Activated naive CD4-positive, alpha-beta T cell treated with anti-CD3 and anti-CD28 coated beads for 36 hours (primary cell): ENCODE measurements at regions of chr20 and their contacts with region 1.

Region 1: DNA sequence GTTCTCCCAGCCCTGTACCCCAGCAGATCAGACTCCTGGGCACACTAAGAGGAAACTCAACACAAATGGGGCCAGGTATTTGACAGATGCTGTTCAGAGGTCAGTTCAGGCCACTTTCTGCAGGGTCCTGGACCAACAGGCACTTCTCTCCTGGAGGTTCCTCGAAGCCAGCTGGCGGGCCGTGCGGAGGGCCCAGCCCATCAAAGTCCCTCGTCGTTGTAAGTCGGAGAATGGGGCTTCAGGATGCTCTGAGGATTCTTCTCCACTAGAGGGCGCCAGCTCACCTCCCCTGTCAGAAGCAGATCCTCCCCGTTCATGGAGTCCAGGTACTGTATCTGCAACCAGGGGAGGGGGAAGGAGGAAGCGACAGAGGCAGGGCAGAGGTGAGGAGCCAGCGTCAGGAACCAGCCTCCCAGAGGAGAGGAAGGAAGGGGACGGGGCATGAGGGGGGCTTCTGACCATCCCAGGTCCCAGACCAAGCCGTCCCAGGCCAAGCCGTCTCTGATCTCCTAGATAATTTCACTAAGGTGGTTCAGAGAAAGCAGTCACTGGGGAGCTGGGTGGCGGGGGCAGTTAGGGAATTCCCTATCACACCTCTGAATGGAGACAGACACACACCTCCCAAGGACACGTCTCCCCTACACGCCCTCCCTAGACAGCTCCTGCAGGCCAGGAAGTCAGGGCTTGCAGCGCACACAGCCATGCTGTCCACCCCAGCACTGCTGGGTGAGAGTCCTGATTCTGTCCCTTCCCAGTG is 11.7 kb upstream of the FAM83C start:
- DNase-seq: peak; percentile 95
- H3K4me3 Mint-ChIP-seq: no peak overlapping the region
- H3K27ac Mint-ChIP-seq: peak overlapping the region; percentile 10
- H3K4me1 Mint-ChIP-seq: peaks cover 54% of the 10 kb centered on the region
- H3K27me3 Mint-ChIP-seq: no peaks in the 10 kb centered on the region

Region 2: GRCh38 chr20:35039146-35039545 is 264.8 kb before region 1 on chr20:
- CTCF ChIA-PET with region 1: no interaction called
- intact Hi-C with region 1: no loop called
- DNase-seq: no peak
- H3K4me3 Mint-ChIP-seq: no peak overlapping the region
- H3K27ac Mint-ChIP-seq: peak overlapping the region; percentile 69
- H3K4me1 Mint-ChIP-seq: peaks cover 6% of the 10 kb centered on the region
- H3K27me3 Mint-ChIP-seq: no peaks in the 10 kb centered on the region

Region 3: DNA sequence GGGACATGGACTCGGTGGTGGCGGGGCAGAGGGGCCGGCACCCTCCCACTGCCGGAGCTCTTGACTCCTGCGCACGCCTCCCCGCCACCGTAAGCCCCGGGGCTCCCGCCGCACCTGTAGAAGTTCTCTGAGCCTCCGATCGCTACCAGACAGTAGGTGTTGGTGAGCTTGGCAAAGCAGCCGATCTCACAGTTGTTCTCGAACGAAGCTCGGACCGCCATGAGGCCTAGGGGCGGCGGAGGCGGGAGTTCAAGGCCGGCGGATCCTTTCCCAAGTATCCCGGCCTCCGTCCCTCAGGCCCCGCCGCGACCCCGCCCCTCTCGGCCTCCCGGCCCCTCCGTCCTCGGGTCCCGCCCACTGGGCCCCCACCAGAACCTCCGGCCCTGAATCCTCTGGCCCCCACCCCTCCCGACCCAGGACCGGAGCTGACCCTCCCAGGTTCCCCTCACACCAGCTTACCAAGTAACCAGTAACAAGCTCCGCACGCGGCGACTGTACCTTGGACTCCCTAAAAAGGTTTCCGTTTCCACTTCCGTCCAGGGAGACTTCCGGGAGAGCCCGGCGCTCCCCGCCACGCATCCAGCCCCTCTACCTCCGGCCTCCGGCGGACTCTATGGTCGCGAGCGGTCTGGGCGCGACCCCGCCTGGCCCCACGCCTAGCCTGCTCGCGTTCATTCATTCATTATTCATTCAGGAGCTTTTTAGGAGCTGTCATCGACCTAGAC is 19.5 kb before region 1 on chr20 and contains the start of gene EIF6:
- CTCF ChIA-PET with region 1: interaction called, 7 read pairs
- intact Hi-C with region 1: loop called (anchors 1 kb)
- DNase-seq: peak; percentile 87
- H3K4me3 Mint-ChIP-seq: peak within 1 kb of the TSS; percentile 84
- H3K27ac Mint-ChIP-seq: peak within 1 kb of the TSS; percentile 88
- H3K4me1 Mint-ChIP-seq: peaks cover 25% of the 10 kb centered on the region
- H3K27me3 Mint-ChIP-seq: no peaks in the 10 kb centered on the region
- total RNA-seq, gene EIF6: 93.0 to 94.7 TPM

Region 4: DNA sequence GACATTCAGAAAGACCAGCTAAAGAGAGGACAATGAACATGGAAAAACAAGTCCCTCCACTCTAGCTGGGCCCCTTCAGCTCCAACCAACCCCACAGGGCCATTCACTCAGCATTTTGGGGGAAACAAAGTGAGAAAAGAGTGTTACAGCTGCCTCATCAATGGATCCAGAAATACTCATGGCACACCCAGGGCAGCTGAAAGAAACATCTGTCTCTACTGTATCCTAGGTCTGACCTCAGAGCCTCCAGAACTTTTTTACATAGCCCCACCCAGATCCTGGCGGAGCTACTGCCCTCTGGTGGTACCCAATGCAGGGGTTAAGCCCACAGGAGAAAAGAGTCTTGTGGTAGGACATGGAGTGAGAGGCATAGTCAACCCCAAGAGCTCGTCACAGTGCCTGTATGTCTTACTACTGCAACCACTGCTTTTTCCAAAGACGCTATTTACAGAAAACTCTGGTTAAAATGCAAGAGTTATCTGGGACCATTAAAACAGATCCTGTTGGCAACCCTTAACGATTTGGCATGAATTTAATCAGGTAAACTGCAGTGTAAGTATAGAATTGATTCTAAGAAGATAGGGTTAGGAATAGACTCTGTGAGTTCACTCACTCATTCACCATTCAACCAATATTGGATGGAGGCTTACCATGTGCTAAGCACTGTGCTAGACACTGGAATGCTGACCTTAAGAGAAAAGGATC is 25.7 kb after region 1 on chr20:
- CTCF ChIA-PET with region 1: interaction called, 101 read pairs
- intact Hi-C with region 1: loop called (anchors 1 kb)
- DNase-seq: peak; percentile 81
- H3K4me3 Mint-ChIP-seq: no peak overlapping the region
- H3K27ac Mint-ChIP-seq: no peak overlapping the region
- H3K4me1 Mint-ChIP-seq: peaks cover 42% of the 10 kb centered on the region
- H3K27me3 Mint-ChIP-seq: no peaks in the 10 kb centered on the region

Region 5: DNA sequence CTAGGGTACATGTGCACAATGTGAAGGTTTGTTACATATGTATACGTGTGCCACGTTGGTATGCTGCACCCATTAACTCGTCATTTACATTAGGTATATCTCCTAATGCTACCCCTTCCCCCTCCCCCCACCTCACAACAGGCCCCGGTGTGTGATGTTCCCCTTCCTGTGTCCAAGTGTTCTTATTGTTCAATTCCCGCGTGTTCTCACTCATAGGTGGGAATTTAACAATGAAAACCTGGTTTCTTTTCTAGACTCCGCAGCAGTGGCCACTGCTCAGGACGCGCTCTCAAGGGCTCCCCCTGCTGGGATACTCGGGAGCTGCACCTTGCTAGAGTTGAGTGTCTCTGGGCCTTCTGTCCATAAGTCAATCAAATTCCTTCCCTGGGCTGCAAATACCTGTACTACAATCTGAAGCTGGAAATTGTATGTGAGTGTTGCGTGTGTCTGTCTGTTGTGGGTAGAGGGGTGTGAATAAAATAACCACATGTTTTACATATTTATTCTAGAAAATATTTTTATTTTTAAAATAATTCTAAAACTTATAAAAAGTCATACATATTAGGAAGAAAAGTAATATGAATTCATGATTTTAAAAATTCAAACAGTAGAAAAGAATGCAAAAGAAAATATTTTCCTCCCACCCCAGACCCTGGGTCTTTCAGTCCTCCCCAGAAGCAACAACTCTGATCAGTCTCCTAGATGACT is 143.3 kb after region 1 on chr20:
- CTCF ChIA-PET with region 1: interaction called, 79 read pairs
- intact Hi-C with region 1: loop called (anchors 1 kb)
- DNase-seq: peak; percentile 97
- H3K4me3 Mint-ChIP-seq: peak overlapping the region; percentile 72
- H3K27ac Mint-ChIP-seq: no peak overlapping the region
- H3K4me1 Mint-ChIP-seq: peaks cover 3% of the 10 kb centered on the region
- H3K27me3 Mint-ChIP-seq: peaks cover 2% of the 10 kb centered on the region

Region 6: GRCh38 chr20:35454881-35455609 is 151.1 kb after region 1 on chr20 and contains the start of gene CEP250:
- CTCF ChIA-PET with region 1: interaction called, 79 read pairs
- intact Hi-C with region 1: no loop called
- DNase-seq: peak; percentile 94
- H3K4me3 Mint-ChIP-seq: peak within 1 kb of the TSS; percentile 89
- H3K27ac Mint-ChIP-seq: peak within 1 kb of the TSS; percentile 99
- H3K4me1 Mint-ChIP-seq: peaks cover 27% of the 10 kb centered on the region
- H3K27me3 Mint-ChIP-seq: no peaks in the 10 kb centered on the region
- total RNA-seq, gene CEP250: 43.4 to 46.9 TPM